Adrenal gland (tissue), 19 donors: ENCODE measurements at regions of chr17 and their contacts with region 1.

Region 1: GRCh38 chr17:33241390-33241789 is 51.7 kb downstream of the ASIC2 start:
- DNase-seq: peak in 3 of 7 donors; percentile 32 to 47 (median 32)
- H3K4me3 ChIP-seq: no peak overlapping the region
- H3K27ac ChIP-seq: peak overlapping the region in 1 of 5 donors; percentile 68
- H3K4me1 ChIP-seq: peaks cover 8 to 13% of the 10 kb centered on the region in 2 donors
- H3K27me3 ChIP-seq: no peaks in the 10 kb centered on the region
- CTCF ChIP-seq: no peak
- POLR2A ChIP-seq: no peak

Region 2: GRCh38 chr17:33288954-33289353 is 47.6 kb after region 1 on chr17:
- intact Hi-C with region 1: loop called in 1 of 2 experiments (anchors 5 kb)
- DNase-seq: no peak
- H3K4me3 ChIP-seq: no peak overlapping the region
- H3K27ac ChIP-seq: no peak overlapping the region
- H3K4me1 ChIP-seq: peaks cover 7 to 15% of the 10 kb centered on the region in 2 donors
- H3K27me3 ChIP-seq: peaks cover 23% of the 10 kb centered on the region
- CTCF ChIP-seq: no peak
- POLR2A ChIP-seq: no peak